ENCODE measurements at regions of chr5 and their contacts with region 1.

Region 1: GRCh38 chr5:136006761-136007251 is 22.0 kb upstream of the TGFBI start:
- DNase-seq: peak; percentile 81 to 93
- ATAC-seq: peak; percentile 86 to 92
- H3K4me3 ChIP-seq: no peak overlapping the region; the same call in 2 of the 3 replicates
- H3K27ac ChIP-seq: peak overlapping the region; percentile 92 to 96
- H3K4me1 ChIP-seq: peaks cover 60% of the 10 kb centered on the region
- CTCF ChIP-seq: no peak
- EP300 ChIP-seq: peak; percentile 72 to 86; a peak in 2 of 5 replicates
- POLR2A ChIP-seq: no peak
- RAD21 ChIP-seq: peak in 1 of 2 experiments; percentile 43; a peak in 3 of 5 replicates

Region 2: DNA sequence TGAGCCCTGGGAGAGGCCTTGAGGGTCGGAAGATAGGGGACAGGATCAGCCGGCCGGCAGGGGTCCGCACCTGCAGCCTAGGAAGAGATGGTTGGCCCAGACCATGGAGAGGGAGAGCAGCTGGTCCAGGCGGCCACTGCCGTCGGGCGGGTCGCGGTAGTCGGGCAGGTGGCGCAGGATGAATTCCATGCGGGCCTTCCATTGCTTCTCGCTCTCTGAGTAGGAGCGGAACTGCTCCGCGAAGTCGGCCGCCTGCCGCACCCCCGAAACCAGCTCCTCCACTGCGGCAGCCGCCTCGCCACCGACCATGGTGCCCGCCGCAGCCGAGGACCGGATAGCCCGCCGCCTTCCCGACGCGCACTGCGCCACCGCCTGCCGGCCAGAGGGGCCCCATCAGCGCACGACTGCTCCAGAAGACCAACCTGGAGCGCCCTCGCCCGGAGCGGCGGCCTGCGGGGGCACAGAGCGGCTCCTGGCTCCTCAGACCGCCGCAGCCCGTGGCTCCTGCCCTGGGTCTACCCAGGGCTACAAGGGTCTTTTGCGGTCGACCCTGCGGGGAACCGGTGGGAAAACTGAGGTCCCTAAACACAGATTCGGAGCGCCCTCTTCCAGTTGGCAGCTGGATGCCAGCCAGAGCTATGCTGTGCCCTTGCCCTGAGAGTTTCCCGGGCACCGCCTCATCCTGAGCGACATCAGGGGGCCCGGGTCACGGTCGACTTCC is 1595.1 kb before region 1 on chr5 and contains the start of gene CDKN2AIPNL:
- CTCF ChIA-PET with region 1: no interaction called
- POLR2A ChIA-PET with region 1: no interaction called
- DNase-seq: peak; percentile 88 to 94
- ATAC-seq: peak; percentile 99
- H3K4me3 ChIP-seq: peak within 1 kb of the TSS; percentile 61
- H3K27ac ChIP-seq: peak within 1 kb of the TSS; percentile 93 to 94
- H3K4me1 ChIP-seq: peaks cover 36% of the 10 kb centered on the region
- CTCF ChIP-seq: peak; percentile 76
- EP300 ChIP-seq: no peak
- POLR2A ChIP-seq: peak; percentile 83
- RAD21 ChIP-seq: peak; percentile 67 to 87
- polyA plus RNA-seq, gene CDKN2AIPNL: 42.4 and 49.9 TPM in 2 replicates

Region 3: DNA sequence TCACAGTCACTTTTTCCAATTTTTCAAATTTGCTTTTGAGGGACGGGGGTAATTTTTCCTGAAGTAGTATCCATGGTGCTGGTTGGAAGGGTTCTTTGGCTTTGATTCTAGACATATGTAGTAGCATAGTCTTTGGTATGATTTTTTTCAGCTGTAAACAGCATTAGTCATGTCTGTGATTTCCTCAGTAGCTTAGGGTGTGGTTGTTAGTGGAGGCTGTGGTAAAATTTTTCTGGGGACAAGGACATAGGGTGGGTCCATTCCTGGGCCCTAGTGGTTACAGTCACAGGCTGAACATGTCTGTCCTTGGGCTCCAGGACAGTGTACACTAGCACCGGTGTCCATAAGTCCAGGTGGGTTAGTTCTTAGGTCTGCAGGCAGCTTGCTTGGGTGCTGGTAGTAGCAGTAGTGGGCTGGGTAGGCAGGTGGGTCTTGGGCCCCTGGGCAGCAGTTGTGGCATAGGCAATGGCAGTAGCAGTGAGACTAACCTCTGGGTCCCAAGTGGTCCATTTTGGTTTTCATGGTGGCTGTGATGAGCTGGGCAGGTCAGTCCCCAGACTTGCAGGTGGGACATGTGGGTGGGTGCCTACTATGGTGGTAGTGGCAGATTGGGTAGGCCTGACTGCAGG is 328.1 kb before region 1 on chr5:
- CTCF ChIA-PET with region 1: no interaction called
- POLR2A ChIA-PET with region 1: no interaction called
- DNase-seq: no peak
- ATAC-seq: no peak
- H3K4me3 ChIP-seq: no peak overlapping the region
- H3K27ac ChIP-seq: no peak overlapping the region
- H3K4me1 ChIP-seq: no peaks in the 10 kb centered on the region
- CTCF ChIP-seq: no peak
- EP300 ChIP-seq: no peak
- POLR2A ChIP-seq: no peak
- RAD21 ChIP-seq: no peak

Region 4: GRCh38 chr5:135986891-135987401 is 19.9 kb before region 1 on chr5:
- CTCF ChIA-PET with region 1: interaction called, 15 read pairs
- POLR2A ChIA-PET with region 1: no interaction called
- DNase-seq: no peak
- ATAC-seq: no peak; a peak in 2 of 6 replicates
- H3K4me3 ChIP-seq: no peak overlapping the region
- H3K27ac ChIP-seq: peak overlapping the region in 1 of 2 experiments; percentile 60; a peak in 3 of 6 replicates
- H3K4me1 ChIP-seq: no peaks in the 10 kb centered on the region
- CTCF ChIP-seq: no peak
- EP300 ChIP-seq: no peak
- POLR2A ChIP-seq: no peak
- RAD21 ChIP-seq: no peak

Region 5: GRCh38 chr5:135993880-135994636 is 12.7 kb before region 1 on chr5:
- CTCF ChIA-PET with region 1: interaction called, 29 read pairs
- POLR2A ChIA-PET with region 1: interaction called, 31 read pairs
- DNase-seq: peak in 1 of 2 experiments; percentile 78
- ATAC-seq: peak; percentile 85 to 87
- H3K4me3 ChIP-seq: peak overlapping the region; percentile 18
- H3K27ac ChIP-seq: peak overlapping the region; percentile 85 to 92
- H3K4me1 ChIP-seq: peaks cover 44% of the 10 kb centered on the region
- CTCF ChIP-seq: no peak
- EP300 ChIP-seq: peak; percentile 37 to 57; a peak in 2 of 5 replicates
- POLR2A ChIP-seq: no peak
- RAD21 ChIP-seq: 0 out of 5 replicates have a peak, but pooled peaks of 1 of the 2 experiments have one; percentile 6

Region 6: DNA sequence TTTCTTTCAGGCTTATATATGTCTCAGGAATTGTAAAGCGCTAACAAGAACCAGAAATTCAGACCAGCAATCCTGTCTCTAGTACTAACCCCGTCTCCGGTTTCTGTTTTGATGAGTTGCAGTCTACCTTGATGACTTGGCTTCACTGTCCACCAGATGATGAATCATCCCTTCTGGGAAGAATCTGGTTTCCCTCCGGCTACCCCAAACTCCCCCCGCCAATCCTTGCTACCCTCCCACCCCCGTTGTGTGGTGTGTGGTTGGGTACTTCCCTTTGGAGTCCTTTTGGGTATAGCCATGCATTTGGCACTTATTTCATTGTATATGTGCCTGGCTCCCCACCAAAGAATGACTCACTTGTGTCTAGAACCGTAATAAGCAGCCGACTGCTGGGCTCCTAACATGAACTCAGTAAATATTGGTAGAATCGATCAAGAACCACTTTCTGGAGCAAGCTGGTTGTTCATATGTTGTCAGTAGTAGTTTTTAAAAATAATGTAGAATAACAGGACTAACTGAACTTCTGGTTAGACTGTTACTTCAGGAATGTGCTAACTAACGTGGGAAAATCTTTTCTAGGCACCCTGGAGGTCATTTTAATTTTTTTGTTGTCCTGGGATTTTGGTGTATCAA is 13.7 kb after region 1 on chr5:
- CTCF ChIA-PET with region 1: interaction called, 25 read pairs
- POLR2A ChIA-PET with region 1: interaction called, 4 read pairs
- DNase-seq: peak; percentile 89 to 95
- ATAC-seq: peak; percentile 79 to 83
- H3K4me3 ChIP-seq: no peak overlapping the region
- H3K27ac ChIP-seq: peak overlapping the region; percentile 96 to 97
- H3K4me1 ChIP-seq: peaks cover 63% of the 10 kb centered on the region
- CTCF ChIP-seq: no peak
- EP300 ChIP-seq: peak; percentile 72 to 93; a peak in 4 of 5 replicates
- POLR2A ChIP-seq: no peak
- RAD21 ChIP-seq: peak in 1 of 2 experiments; percentile 54; a peak in 2 of 5 replicates

Region 7: GRCh38 chr5:136028782-136029742 is 22.3 kb after region 1 on chr5 and contains the start of gene TGFBI:
- CTCF ChIA-PET with region 1: interaction called, 18 read pairs
- POLR2A ChIA-PET with region 1: interaction called, 20 read pairs
- DNase-seq: peak; percentile 78 to 83
- ATAC-seq: peak; percentile 89 to 94
- H3K4me3 ChIP-seq: peak within 1 kb of the TSS; percentile 97
- H3K27ac ChIP-seq: peak within 1 kb of the TSS; percentile 99 to 100
- H3K4me1 ChIP-seq: peaks cover 52% of the 10 kb centered on the region
- CTCF ChIP-seq: no peak; the same call in 2 of the 3 replicates
- EP300 ChIP-seq: no peak
- POLR2A ChIP-seq: peak; percentile 98
- RAD21 ChIP-seq: peak in 1 of 2 experiments; percentile 51; a peak in 3 of 5 replicates
- polyA plus RNA-seq, gene TGFBI: 1,135 and 1,466 TPM in 2 replicates

Region 8: GRCh38 chr5:136159457-136159856 is 152.7 kb after region 1 on chr5:
- CTCF ChIA-PET with region 1: no interaction called
- POLR2A ChIA-PET with region 1: no interaction called
- DNase-seq: no peak
- ATAC-seq: no peak
- H3K4me3 ChIP-seq: no peak overlapping the region
- H3K27ac ChIP-seq: no peak overlapping the region
- H3K4me1 ChIP-seq: no peaks in the 10 kb centered on the region
- CTCF ChIP-seq: no peak
- EP300 ChIP-seq: no peak
- POLR2A ChIP-seq: no peak
- RAD21 ChIP-seq: no peak

Measured in A549 (cell line).